IMR-90 (cell line): ENCODE measurements at regions of chr5 and their contacts with region 1.

Region 1: DNA sequence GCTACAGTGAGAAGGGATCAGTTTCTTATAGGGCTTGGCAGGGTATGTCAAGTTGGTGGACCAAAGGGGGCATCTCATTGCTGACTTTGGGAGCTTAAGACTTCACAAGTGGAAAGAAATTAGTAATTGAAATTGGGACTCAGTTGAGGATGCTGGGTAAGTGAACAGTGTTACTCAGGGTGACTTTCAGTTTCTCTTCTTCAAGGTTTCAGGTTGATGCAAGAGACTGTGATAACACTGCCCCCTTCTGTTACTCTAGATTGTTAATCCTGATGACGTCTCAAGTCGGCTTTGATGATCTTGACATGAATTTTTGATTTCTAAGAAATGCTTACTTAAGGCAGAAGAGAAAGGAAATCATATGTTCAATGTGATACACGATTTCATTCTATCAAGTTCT is 21.3 kb downstream of the KCTD16 start:
- DNase-seq: peak; percentile 87
- ATAC-seq: peak; percentile 46
- H3K4me3 ChIP-seq: peak overlapping the region; percentile 41; the same call in 1 of the 2 replicates
- H3K27ac ChIP-seq: peak overlapping the region; percentile 37; the same call in 1 of the 2 replicates
- H3K4me1 ChIP-seq: peaks cover 12% of the 10 kb centered on the region
- H3K27me3 ChIP-seq: no peaks in the 10 kb centered on the region
- CTCF ChIP-seq: peak; percentile 64
- POLR2A ChIP-seq: no peak
- RAD21 ChIP-seq: peak; percentile 64

Region 2: DNA sequence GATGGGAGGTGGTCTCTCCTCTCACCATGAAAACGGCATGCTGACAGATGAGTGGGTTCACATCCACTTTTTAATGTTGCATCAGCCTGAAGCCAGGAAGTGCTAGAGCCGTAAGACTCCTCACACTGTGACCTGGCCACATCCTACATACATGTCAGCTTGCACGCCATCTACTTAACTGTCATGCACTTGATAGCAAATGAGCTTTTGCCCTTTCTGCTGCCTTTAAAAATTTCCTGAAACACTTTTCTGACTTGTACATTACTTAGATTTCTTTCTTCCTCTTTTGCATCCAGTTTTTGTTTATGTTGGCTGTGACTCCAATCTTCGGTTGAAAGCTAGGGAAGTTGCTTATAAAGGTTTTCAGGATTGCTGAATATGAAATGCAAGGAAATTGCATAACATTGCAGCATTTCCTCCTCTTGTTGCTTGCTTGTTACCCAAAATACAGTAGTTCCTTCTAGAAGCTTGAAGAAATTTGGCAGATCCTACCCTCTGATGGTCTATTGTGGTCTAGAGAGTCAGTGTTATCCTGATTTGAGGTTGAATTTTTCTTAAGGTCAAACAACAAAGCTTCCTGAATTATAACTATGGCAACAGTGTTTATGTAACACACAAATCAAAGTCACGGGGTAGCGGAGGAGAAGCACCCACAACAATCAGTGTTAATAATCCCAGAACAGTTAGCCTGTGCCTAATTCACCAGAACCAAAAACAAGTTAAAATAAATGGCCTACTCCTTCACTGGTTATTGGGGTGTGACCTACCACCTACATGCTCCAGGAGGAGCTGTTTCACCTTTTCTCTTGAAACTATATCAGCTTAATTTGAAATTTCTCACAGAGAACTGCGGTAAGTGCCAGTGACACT is 1189.3 kb before region 1 on chr5:
- CTCF ChIA-PET with region 1: no interaction called
- POLR2A ChIA-PET with region 1: no interaction called
- dilution Hi-C with region 1: no loop called
- in situ Hi-C with region 1: loop called (anchors 25 kb)
- intact Hi-C with region 1: no loop called
- DNase-seq: peak; percentile 86
- ATAC-seq: peak; percentile 59
- H3K4me3 ChIP-seq: no peak overlapping the region
- H3K27ac ChIP-seq: peak overlapping the region; percentile 81
- H3K4me1 ChIP-seq: peaks cover 12% of the 10 kb centered on the region
- H3K27me3 ChIP-seq: no peaks in the 10 kb centered on the region
- CTCF ChIP-seq: peak; percentile 63
- POLR2A ChIP-seq: no peak; the same call in 1 of the 2 replicates
- RAD21 ChIP-seq: peak; percentile 62

Region 3: GRCh38 chr5:144691936-144692335 is 499.9 kb after region 1 on chr5:
- CTCF ChIA-PET with region 1: no interaction called
- POLR2A ChIA-PET with region 1: no interaction called
- dilution Hi-C with region 1: no loop called
- in situ Hi-C with region 1: no loop called
- intact Hi-C with region 1: no loop called
- DNase-seq: peak; percentile 1
- ATAC-seq: no peak
- H3K4me3 ChIP-seq: no peak overlapping the region
- H3K27ac ChIP-seq: no peak overlapping the region
- H3K4me1 ChIP-seq: no peaks in the 10 kb centered on the region
- H3K27me3 ChIP-seq: no peaks in the 10 kb centered on the region
- CTCF ChIP-seq: no peak
- POLR2A ChIP-seq: no peak
- RAD21 ChIP-seq: no peak